Activated CD8-positive, alpha-beta T cell treated with anti-CD3 and anti-CD28 coated beads, Interleukin-2, amount 10 ng/mL, durations not matched to agents 7 days and 5 days (primary cell): ENCODE measurements at regions of chr2 and their contacts with region 1.

Region 1: GRCh38 chr2:38602732-38603401 is at the start of gene HNRNPLL:
- DNase-seq: peak; percentile 97
- ATAC-seq: peak; percentile 89
- H3K4me3 Mint-ChIP-seq: peak within 1 kb of the TSS; percentile 89
- H3K27ac Mint-ChIP-seq: peak within 1 kb of the TSS; percentile 90
- H3K4me1 Mint-ChIP-seq: peaks cover 50% of the 10 kb centered on the region
- H3K27me3 Mint-ChIP-seq: no peaks in the 10 kb centered on the region
- total RNA-seq, gene HNRNPLL: 46.5 to 46.6 TPM

Region 2: GRCh38 chr2:38560092-38560491 is 42.8 kb before region 1 on chr2:
- CTCF ChIA-PET with region 1: no interaction called
- POLR2A ChIA-PET with region 1: no interaction called
- DNase-seq: no peak
- ATAC-seq: no peak
- H3K4me3 Mint-ChIP-seq: no peak overlapping the region
- H3K27ac Mint-ChIP-seq: no peak overlapping the region
- H3K4me1 Mint-ChIP-seq: no peaks in the 10 kb centered on the region
- H3K27me3 Mint-ChIP-seq: no peaks in the 10 kb centered on the region

Region 3: DNA sequence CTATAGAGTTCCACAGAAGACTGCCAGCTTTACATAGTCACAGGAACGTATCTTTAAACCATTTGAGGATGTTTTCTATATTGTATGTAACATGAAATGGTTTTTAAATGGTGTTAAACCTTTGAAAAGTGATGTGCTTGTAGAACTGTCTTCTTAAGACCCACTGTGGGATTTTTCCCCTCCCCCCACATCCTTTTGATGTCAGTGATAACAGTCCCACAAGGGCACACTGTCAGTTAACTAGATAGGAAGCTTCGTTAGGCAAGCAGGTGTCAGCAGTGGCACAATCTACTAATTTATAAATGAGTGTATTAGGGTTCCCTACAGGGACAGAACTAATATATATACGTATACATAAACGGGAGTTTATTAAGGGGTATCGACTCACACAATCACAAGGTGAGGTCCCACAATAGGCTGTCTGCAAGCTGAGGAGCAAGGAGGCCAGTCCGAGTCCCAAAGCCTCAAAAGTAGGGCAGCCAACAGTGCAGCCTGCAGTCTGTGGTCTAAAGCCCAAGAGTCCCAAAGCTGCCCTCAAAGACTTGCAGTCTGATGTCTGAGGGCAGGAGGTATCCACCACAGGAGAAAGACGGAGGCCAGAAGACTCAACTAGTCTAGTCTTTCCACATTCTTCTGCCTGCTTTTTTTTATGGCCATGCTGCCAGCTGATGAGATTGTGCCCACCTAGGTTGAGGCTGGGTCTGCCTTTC is 23.6 kb after region 1 on chr2:
- CTCF ChIA-PET with region 1: interaction called, 28 read pairs
- POLR2A ChIA-PET with region 1: interaction called, 5 read pairs
- DNase-seq: peak; percentile 73
- ATAC-seq: peak; percentile 81
- H3K4me3 Mint-ChIP-seq: peak overlapping the region; percentile 13
- H3K27ac Mint-ChIP-seq: peak overlapping the region; percentile 54
- H3K4me1 Mint-ChIP-seq: peaks cover 32% of the 10 kb centered on the region
- H3K27me3 Mint-ChIP-seq: no peaks in the 10 kb centered on the region

Region 4: DNA sequence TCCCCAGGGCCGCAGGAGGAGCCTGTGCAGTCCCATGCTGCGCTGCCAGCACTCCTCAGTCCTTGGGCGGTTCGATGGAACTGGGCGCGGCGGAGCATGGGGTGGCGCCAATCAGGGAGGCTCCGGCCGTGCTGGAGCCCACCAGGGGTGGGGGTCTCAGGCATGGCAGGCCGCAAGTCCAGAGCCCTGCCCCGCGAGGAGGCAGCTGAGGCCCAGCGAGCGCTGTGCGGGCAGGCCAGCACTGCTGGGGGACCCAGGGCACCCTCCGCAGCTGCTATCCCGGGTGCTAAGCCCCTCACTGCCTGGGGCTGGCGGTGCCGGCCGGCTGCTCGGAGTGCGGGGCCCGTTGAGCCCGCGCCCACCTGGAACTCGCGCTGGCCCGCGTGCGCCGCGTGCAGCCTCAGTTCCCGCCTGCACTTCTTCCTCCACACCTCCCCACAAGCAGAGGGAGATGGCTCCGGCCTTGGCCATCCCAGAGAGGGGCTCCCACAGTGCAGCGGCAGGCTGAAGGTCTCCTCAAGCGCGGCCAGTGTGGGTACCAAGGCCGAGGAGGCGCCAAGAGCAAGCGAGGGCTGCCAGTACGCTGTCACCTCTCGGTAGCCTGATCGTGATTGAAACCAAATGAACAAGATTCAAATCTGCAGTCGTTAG is 40.3 kb after region 1 on chr2:
- CTCF ChIA-PET with region 1: interaction called, 22 read pairs
- POLR2A ChIA-PET with region 1: interaction called, 3 read pairs
- DNase-seq: no peak
- ATAC-seq: peak; percentile 17
- H3K4me3 Mint-ChIP-seq: no peak overlapping the region
- H3K27ac Mint-ChIP-seq: peak overlapping the region; percentile 92
- H3K4me1 Mint-ChIP-seq: peaks cover 40% of the 10 kb centered on the region
- H3K27me3 Mint-ChIP-seq: no peaks in the 10 kb centered on the region

Region 5: GRCh38 chr2:38653715-38654527 is 51.1 kb after region 1 on chr2:
- CTCF ChIA-PET with region 1: interaction called, 76 read pairs
- POLR2A ChIA-PET with region 1: interaction called, 20 read pairs
- DNase-seq: peak; percentile 58
- ATAC-seq: peak; percentile 61
- H3K4me3 Mint-ChIP-seq: peak overlapping the region; percentile 52
- H3K27ac Mint-ChIP-seq: peak overlapping the region; percentile 92
- H3K4me1 Mint-ChIP-seq: peaks cover 61% of the 10 kb centered on the region
- H3K27me3 Mint-ChIP-seq: no peaks in the 10 kb centered on the region

Region 6: GRCh38 chr2:38672445-38673391 is 69.9 kb after region 1 on chr2:
- CTCF ChIA-PET with region 1: interaction called, 195 read pairs
- POLR2A ChIA-PET with region 1: interaction called, 70 read pairs
- DNase-seq: no peak
- ATAC-seq: no peak
- H3K4me3 Mint-ChIP-seq: no peak overlapping the region
- H3K27ac Mint-ChIP-seq: no peak overlapping the region
- H3K4me1 Mint-ChIP-seq: peaks cover 62% of the 10 kb centered on the region
- H3K27me3 Mint-ChIP-seq: no peaks in the 10 kb centered on the region

Region 7: GRCh38 chr2:38720613-38721241 is 117.9 kb after region 1 on chr2:
- CTCF ChIA-PET with region 1: interaction called, 89 read pairs
- POLR2A ChIA-PET with region 1: interaction called, 4 read pairs
- DNase-seq: no peak
- ATAC-seq: peak; percentile 17
- H3K4me3 Mint-ChIP-seq: no peak overlapping the region
- H3K27ac Mint-ChIP-seq: peak overlapping the region; percentile 37
- H3K4me1 Mint-ChIP-seq: peaks cover 33% of the 10 kb centered on the region
- H3K27me3 Mint-ChIP-seq: no peaks in the 10 kb centered on the region

Region 8: DNA sequence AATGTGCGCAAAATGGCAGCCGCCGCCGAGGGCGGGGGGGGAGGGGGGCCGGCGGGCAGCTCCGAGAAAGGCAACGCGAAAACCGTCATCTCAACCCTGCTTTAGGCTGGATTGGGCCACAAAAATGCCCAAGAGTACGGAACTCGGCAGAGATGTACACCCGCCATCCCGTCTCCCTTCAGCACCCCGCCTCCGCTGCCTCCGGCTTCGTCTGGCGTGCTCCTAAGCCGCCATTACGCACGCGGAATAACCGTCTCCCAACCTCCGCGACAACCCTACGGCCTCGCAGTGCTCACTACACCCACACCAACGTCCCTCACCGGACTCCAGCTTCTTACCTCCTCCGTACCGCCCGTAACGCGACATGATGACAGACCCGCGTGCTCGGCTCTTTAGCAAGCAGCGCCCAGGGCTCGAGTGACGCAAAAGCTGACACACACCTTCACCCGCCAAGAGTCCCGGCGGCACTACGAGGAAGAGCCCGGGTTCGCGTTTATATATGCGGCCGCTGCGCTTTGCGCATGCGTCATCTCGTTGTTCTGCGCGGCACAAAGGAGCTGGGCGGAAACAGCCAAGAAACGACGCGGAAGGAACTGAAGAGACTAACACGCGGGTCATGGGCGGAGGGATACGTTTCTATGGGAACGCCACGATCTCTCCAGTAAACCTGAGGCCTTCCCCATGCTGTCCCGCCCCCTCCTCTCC is 148.2 kb after region 1 on chr2 and contains the start of gene SRSF7:
- CTCF ChIA-PET with region 1: interaction called, 5 read pairs
- POLR2A ChIA-PET with region 1: interaction called, 85 read pairs
- DNase-seq: peak; percentile 98
- ATAC-seq: peak; percentile 79
- H3K4me3 Mint-ChIP-seq: peak within 1 kb of the TSS; percentile 93
- H3K27ac Mint-ChIP-seq: peak within 1 kb of the TSS; percentile 98
- H3K4me1 Mint-ChIP-seq: peaks cover 49% of the 10 kb centered on the region
- H3K27me3 Mint-ChIP-seq: no peaks in the 10 kb centered on the region
- total RNA-seq, gene SRSF7: 348 to 356 TPM